ENCODE measurements at regions of chr7 and their contacts with region 1.

Region 1: GRCh38 chr7:37359662-37360444 is 88.8 kb downstream of the ELMO1 start:
- DNase-seq: peak; percentile 43
- ATAC-seq: peak; percentile 21
- H3K4me3 Mint-ChIP-seq: no peak overlapping the region
- H3K27ac Mint-ChIP-seq: peak overlapping the region; percentile 76
- H3K4me1 Mint-ChIP-seq: peaks cover 77% of the 10 kb centered on the region
- H3K27me3 Mint-ChIP-seq: no peaks in the 10 kb centered on the region
- CTCF ChIP-seq: no peak

Region 2: DNA sequence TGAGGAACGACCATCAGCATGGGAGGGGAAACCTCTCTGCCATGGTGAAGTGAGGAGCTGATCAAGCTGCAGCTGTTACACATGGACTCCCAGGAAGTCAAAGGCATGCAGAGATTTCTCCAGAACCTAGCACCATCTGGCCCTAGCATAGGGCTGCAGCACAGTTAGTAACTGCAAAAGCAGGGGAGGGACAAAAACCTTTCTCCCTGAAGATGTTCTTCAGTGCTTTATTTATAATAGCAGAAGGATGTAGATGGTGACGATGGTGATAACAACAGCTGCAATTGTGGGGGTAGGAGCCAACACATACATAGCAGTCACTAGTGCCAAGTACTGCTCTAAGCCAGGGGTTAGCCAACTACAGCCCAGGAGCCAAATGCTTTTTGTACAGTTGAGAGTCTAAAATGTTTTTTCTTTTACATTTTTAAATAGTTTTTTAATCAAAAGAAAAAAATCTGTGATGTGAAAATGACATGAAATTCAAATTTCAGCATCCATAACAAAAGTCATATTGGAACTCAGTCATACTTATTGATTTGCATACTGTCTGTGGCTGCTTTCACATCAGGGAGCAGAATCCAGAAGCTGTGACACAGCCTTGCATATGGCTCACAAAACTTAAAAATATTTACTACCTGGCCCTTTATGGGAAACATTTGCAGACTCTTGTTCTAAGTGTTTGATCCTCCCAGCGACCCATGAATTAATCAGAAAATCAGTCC is 210.6 kb before region 1 on chr7:
- CTCF ChIA-PET with region 1: no interaction called
- POLR2A ChIA-PET with region 1: no interaction called
- intact Hi-C with region 1: no loop called
- DNase-seq: no peak
- ATAC-seq: no peak
- H3K4me3 Mint-ChIP-seq: no peak overlapping the region
- H3K27ac Mint-ChIP-seq: no peak overlapping the region
- H3K4me1 Mint-ChIP-seq: no peaks in the 10 kb centered on the region
- H3K27me3 Mint-ChIP-seq: no peaks in the 10 kb centered on the region
- CTCF ChIP-seq: no peak

Region 3: DNA sequence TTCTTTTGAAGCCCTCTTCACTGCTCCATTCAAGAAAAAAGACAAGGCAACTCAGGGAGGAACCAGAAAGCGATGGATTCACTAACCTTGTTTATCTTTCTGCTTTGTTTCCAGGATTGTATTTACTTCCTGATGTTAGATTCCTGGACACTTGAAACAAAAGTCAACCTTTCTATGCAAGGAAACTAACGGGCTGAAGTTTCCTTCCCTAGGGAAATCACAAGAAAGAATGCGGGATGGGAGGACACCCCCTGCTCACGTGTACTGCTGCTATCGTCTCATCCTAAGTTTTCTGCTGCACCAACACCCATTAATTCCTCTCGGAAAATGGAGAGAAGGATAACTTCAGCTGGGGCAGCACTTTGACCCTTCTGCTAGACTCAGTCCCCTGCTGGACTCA is 38.5 kb after region 1 on chr7:
- CTCF ChIA-PET with region 1: no interaction called
- POLR2A ChIA-PET with region 1: no interaction called
- intact Hi-C with region 1: no loop called
- DNase-seq: no peak
- ATAC-seq: no peak
- H3K4me3 Mint-ChIP-seq: no peak overlapping the region
- H3K27ac Mint-ChIP-seq: no peak overlapping the region
- H3K4me1 Mint-ChIP-seq: peaks cover 32% of the 10 kb centered on the region
- H3K27me3 Mint-ChIP-seq: no peaks in the 10 kb centered on the region
- CTCF ChIP-seq: no peak

Region 4: DNA sequence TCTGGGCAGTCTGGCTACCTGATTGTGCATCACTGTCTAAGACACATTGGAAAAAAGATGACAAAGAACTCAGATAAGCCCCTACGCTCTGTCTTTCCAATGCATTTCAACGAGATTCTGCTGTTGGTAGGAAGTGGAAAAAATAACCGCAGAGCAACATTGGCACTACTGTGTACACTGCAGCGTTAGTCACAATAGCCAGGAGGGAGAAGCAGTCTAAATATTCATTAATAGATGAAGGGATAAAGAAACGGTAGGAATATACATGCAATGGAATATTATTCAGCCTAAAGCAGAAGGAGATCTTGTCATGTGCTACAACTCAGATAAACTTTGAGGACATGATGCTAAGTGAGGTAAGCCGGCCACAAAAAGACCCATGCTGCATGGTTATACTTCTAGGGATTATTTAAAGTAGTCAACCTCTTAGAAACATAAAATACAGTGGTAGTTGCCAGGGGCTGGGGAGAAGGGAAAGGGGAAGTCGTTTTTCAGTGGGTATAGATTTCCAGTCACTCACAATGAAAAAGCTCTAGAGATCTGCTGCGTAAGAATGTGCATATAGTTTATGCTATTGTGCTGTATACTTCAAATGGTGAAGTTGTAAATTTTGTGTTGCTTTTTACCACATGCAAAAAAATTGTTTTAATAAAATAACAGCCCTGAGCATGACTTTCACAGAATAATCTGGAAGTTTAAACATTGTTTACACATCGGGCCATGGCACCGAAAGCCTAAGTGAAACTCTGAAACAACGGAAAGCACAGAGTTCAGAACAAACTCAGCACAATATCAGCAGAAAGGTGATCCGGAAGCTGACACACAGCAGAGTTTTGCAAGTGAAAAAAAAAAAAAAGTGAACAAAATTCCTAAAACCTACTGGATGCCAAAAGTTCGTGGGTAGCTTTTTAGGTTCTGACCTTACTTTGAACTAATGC is 48.7 kb after region 1 on chr7:
- CTCF ChIA-PET with region 1: interaction called, 3 read pairs
- POLR2A ChIA-PET with region 1: no interaction called
- intact Hi-C with region 1: loop called (anchors 5 kb)
- DNase-seq: peak; percentile 31
- ATAC-seq: peak; percentile 54
- H3K4me3 Mint-ChIP-seq: peak overlapping the region; percentile 73
- H3K27ac Mint-ChIP-seq: peak overlapping the region; percentile 87
- H3K4me1 Mint-ChIP-seq: peaks cover 69% of the 10 kb centered on the region
- H3K27me3 Mint-ChIP-seq: no peaks in the 10 kb centered on the region
- CTCF ChIP-seq: no peak

Region 5: GRCh38 chr7:37674531-37674930 is 314.7 kb after region 1 on chr7:
- CTCF ChIA-PET with region 1: no interaction called
- POLR2A ChIA-PET with region 1: no interaction called
- intact Hi-C with region 1: no loop called
- DNase-seq: no peak
- ATAC-seq: no peak
- H3K4me3 Mint-ChIP-seq: no peak overlapping the region
- H3K27ac Mint-ChIP-seq: no peak overlapping the region
- H3K4me1 Mint-ChIP-seq: no peaks in the 10 kb centered on the region
- H3K27me3 Mint-ChIP-seq: peaks cover 4% of the 10 kb centered on the region
- CTCF ChIP-seq: no peak

Measured in activated CD8-positive, alpha-beta T cell treated with anti-CD3 and anti-CD28 coated beads for 36 hours (primary cell).